Naive thymus-derived CD4-positive, alpha-beta T cell (primary cell): ENCODE measurements at regions of chr11 and their contacts with region 1.

Region 1: GRCh38 chr11:67507864-67508485 is at the start of gene CDK2AP2:
- DNase-seq: peak in 8 of 9 donors; percentile 89 to 97 (median 96)
- ATAC-seq: peak; percentile 81
- H3K4me3 ChIP-seq: peak within 1 kb of the TSS; percentile 91
- H3K4me3 Mint-ChIP-seq: peak within 1 kb of the TSS; percentile 89 to 95 (median 90)
- H3K27ac ChIP-seq: peak within 1 kb of the TSS; percentile 96
- H3K27ac Mint-ChIP-seq: peak within 1 kb of the TSS; percentile 87 to 98 (median 96)
- H3K4me1 ChIP-seq: peaks cover 40 to 43% of the 10 kb centered on the region in 2 donors
- H3K4me1 Mint-ChIP-seq: peaks cover 26 to 45% (median 36%) of the 10 kb centered on the region in 7 donors
- H3K27me3 ChIP-seq: no peaks in the 10 kb centered on the region
- H3K27me3 Mint-ChIP-seq: peaks cover 0 to 18% (median 0%) of the 10 kb centered on the region in 5 donors
- total RNA-seq, gene CDK2AP2: 31.0 to 168 (median 61.9) TPM

Region 2: DNA sequence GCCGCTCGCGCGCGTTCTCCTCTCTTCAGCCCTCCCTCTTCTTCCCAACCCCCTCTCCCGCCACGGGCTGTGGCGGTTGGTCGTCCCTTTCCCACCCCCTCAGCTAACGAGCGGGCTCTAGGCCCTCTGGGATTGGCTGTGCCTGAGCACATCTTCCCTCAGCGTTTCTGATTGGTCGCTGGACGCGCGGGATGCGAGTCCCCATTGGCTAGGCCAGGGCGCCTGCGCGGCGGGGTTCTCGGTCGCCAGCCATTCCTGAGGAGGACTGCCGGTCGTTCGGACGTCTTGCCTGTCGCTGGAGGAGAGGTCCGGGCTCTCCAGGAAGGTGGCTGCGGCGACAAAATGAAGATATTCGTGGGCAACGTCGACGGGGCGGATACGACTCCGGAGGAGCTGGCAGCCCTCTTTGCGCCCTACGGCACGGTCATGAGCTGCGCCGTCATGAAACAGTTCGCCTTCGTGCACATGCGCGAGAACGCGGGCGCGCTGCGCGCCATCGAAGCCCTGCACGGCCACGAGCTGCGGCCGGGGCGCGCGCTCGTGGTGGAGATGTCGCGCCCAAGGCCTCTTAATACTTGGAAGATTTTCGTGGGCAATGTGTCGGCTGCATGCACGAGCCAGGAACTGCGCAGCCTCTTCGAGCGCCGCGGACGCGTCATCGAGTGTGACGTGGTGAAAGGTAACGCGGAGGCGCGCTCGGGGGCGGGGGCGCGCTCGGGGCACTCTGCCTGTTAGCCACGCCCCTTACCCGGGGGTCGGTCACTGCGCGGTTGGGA is 891.4 kb before region 1 on chr11 and contains the start of gene RBM14:
- CTCF ChIA-PET with region 1: no interaction called
- POLR2A ChIA-PET with region 1: no interaction called
- intact Hi-C with region 1: loop called in 1 of 2 experiments (anchors 5 kb)
- DNase-seq: peak; percentile 96 to 99 (median 99)
- ATAC-seq: peak; percentile 88
- H3K4me3 ChIP-seq: peak within 1 kb of the TSS; percentile 97
- H3K4me3 Mint-ChIP-seq: peak within 1 kb of the TSS; percentile 86 to 99 (median 98)
- H3K27ac ChIP-seq: peak within 1 kb of the TSS; percentile 83
- H3K27ac Mint-ChIP-seq: peak within 1 kb of the TSS; percentile 96 to 99 (median 98)
- H3K4me1 ChIP-seq: peaks cover 29 to 30% of the 10 kb centered on the region in 2 donors
- H3K4me1 Mint-ChIP-seq: peaks cover 26 to 55% (median 47%) of the 10 kb centered on the region in 7 donors
- H3K27me3 ChIP-seq: no peaks in the 10 kb centered on the region
- H3K27me3 Mint-ChIP-seq: peaks cover 0 to 3% (median 0%) of the 10 kb centered on the region in 5 donors
- total RNA-seq, gene RBM14: 165 to 543 (median 192) TPM

Region 3: GRCh38 chr11:67265633-67266423 is 242.1 kb before region 1 on chr11:
- CTCF ChIA-PET with region 1: no interaction called
- POLR2A ChIA-PET with region 1: no interaction called
- intact Hi-C with region 1: loop called in 1 of 2 experiments (anchors 5 kb)
- DNase-seq: peak; percentile 50 to 91 (median 78)
- ATAC-seq: peak; percentile 76
- H3K4me3 ChIP-seq: peak overlapping the region; percentile 25
- H3K4me3 Mint-ChIP-seq: peak overlapping the region; percentile 75 to 99 (median 84)
- H3K27ac ChIP-seq: peak overlapping the region; percentile 65
- H3K27ac Mint-ChIP-seq: peak overlapping the region; percentile 72 to 94 (median 81)
- H3K4me1 ChIP-seq: peaks cover 42 to 56% of the 10 kb centered on the region in 2 donors
- H3K4me1 Mint-ChIP-seq: peaks cover 22 to 77% (median 65%) of the 10 kb centered on the region in 7 donors
- H3K27me3 ChIP-seq: no peaks in the 10 kb centered on the region
- H3K27me3 Mint-ChIP-seq: no peaks in the 10 kb centered on the region

Region 4: GRCh38 chr11:67401495-67402191 is 106.3 kb before region 1 on chr11 and contains the start of gene PPP1CA:
- CTCF ChIA-PET with region 1: interaction called, 4 read pairs
- POLR2A ChIA-PET with region 1: interaction called, 28 read pairs
- intact Hi-C with region 1: loop called (anchors 1 kb)
- DNase-seq: peak; percentile 87 to 99 (median 92)
- ATAC-seq: peak; percentile 93
- H3K4me3 ChIP-seq: peak within 1 kb of the TSS; percentile 98
- H3K4me3 Mint-ChIP-seq: peak within 1 kb of the TSS; percentile 90 to 100 (median 96)
- H3K27ac ChIP-seq: peak within 1 kb of the TSS; percentile 87
- H3K27ac Mint-ChIP-seq: peak within 1 kb of the TSS; percentile 81 to 97 (median 95)
- H3K4me1 ChIP-seq: peaks cover 55 to 63% of the 10 kb centered on the region in 2 donors
- H3K4me1 Mint-ChIP-seq: peaks cover 22 to 59% (median 52%) of the 10 kb centered on the region in 7 donors
- H3K27me3 ChIP-seq: no peaks in the 10 kb centered on the region
- H3K27me3 Mint-ChIP-seq: no peaks in the 10 kb centered on the region
- total RNA-seq, gene PPP1CA: 83.0 to 339 (median 122) TPM

Region 5: DNA sequence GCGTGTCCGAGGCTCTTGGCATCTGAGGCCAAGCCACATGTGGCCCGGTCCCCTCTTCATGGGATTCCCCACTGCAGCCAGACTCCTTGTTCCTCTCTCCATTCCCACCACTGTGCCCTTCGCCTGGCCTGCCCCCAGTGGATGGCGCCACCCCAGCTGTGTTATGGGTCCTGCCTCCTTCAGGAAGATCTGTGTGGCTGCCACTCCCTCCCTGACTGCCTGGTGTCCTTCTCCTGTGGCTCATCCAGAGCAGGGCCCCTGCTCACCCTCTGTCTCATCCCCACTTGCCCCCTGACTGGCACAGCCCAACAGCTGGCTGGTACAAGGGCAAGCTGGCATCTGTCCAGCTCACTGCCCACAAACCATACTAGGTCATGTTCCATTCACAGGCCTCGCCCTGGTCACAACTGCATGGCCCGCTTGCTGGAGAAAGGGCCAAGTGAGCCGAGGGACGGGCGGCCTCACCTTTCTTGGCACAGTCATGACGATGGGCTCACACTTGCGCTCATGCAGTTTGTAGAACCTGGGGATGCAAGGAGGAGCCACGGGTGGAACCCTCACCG is 68.6 kb before region 1 on chr11:
- CTCF ChIA-PET with region 1: no interaction called
- POLR2A ChIA-PET with region 1: interaction called, 22 read pairs
- intact Hi-C with region 1: loop called (anchors 1 kb)
- DNase-seq: peak in 1 of 9 donors; percentile 55
- ATAC-seq: no peak
- H3K4me3 ChIP-seq: peak overlapping the region; percentile 100
- H3K4me3 Mint-ChIP-seq: peak overlapping the region; percentile 85 to 99 (median 97)
- H3K27ac ChIP-seq: peak overlapping the region; percentile 85
- H3K27ac Mint-ChIP-seq: peak overlapping the region; percentile 90 to 97 (median 95)
- H3K4me1 ChIP-seq: peaks cover 38 to 64% of the 10 kb centered on the region in 2 donors
- H3K4me1 Mint-ChIP-seq: peaks cover 40 to 74% (median 55%) of the 10 kb centered on the region in 7 donors
- H3K27me3 ChIP-seq: no peaks in the 10 kb centered on the region
- H3K27me3 Mint-ChIP-seq: no peaks in the 10 kb centered on the region

Region 6: DNA sequence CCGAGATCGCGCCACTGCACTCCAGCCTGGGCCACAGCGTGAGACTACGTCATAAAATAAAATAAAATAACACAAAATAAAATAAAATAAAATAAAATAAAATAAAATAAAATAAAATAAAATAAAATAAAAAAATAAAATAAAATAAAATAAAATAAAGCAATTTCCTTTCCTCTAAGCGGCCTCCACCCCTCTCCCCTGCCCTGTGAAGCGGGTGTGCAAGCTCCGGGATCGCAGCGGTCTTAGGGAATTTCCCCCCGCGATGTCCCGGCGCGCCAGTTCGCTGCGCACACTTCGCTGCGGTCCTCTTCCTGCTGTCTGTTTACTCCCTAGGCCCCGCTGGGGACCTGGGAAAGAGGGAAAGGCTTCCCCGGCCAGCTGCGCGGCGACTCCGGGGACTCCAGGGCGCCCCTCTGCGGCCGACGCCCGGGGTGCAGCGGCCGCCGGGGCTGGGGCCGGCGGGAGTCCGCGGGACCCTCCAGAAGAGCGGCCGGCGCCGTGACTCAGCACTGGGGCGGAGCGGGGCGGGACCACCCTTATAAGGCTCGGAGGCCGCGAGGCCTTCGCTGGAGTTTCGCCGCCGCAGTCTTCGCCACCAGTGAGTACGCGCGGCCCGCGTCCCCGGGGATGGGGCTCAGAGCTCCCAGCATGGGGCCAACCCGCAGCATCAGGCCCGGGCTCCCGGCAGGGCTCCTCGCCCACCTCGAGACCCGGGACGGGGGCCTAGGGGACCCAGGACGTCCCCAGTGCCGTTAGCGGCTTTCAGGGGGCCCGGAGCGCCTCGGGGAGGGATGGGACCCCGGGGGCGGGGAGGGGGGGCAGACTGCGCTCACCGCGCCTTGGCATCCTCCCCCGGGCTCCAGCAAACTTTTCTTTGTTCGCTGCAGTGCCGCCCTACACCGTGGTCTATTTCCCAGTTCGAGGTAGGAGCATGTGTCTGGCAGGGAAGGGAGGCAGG is 75.6 kb after region 1 on chr11 and contains the start of gene GSTP1:
- CTCF ChIA-PET with region 1: no interaction called
- POLR2A ChIA-PET with region 1: no interaction called
- intact Hi-C with region 1: loop called in 1 of 2 experiments (anchors 2 kb)
- DNase-seq: peak; percentile 51 to 86 (median 62)
- ATAC-seq: peak; percentile 86
- H3K4me3 ChIP-seq: peak within 1 kb of the TSS; percentile 69
- H3K4me3 Mint-ChIP-seq: peak within 1 kb of the TSS; percentile 79 to 98 (median 92)
- H3K27ac ChIP-seq: peak within 1 kb of the TSS; percentile 77
- H3K27ac Mint-ChIP-seq: peak within 1 kb of the TSS; percentile 78 to 93 (median 90)
- H3K4me1 ChIP-seq: peaks cover 9 to 18% of the 10 kb centered on the region in 2 donors
- H3K4me1 Mint-ChIP-seq: peaks cover 37 to 55% (median 44%) of the 10 kb centered on the region in 7 donors
- H3K27me3 ChIP-seq: no peaks in the 10 kb centered on the region
- H3K27me3 Mint-ChIP-seq: peaks cover 0 to 27% (median 0%) of the 10 kb centered on the region in 5 donors
- total RNA-seq, gene GSTP1: 77.2 to 265 (median 139) TPM